Posterior cingulate gyrus (tissue), 11 donors: ENCODE measurements at regions of chr16 and their contacts with region 1.

Region 1: GRCh38 chr16:1772736-1773584 is at the starts of genes EME2 and MRPS34:
- DNase-seq: peak; percentile 76 to 97 (median 83)

Region 2: GRCh38 chr16:1705688-1706385 is 67.1 kb before region 1 on chr16 and contains the start of gene MAPK8IP3:
- intact Hi-C with region 1: loop called (anchors 5 kb)
- DNase-seq: peak; percentile 86 to 99 (median 90)

Region 3: DNA sequence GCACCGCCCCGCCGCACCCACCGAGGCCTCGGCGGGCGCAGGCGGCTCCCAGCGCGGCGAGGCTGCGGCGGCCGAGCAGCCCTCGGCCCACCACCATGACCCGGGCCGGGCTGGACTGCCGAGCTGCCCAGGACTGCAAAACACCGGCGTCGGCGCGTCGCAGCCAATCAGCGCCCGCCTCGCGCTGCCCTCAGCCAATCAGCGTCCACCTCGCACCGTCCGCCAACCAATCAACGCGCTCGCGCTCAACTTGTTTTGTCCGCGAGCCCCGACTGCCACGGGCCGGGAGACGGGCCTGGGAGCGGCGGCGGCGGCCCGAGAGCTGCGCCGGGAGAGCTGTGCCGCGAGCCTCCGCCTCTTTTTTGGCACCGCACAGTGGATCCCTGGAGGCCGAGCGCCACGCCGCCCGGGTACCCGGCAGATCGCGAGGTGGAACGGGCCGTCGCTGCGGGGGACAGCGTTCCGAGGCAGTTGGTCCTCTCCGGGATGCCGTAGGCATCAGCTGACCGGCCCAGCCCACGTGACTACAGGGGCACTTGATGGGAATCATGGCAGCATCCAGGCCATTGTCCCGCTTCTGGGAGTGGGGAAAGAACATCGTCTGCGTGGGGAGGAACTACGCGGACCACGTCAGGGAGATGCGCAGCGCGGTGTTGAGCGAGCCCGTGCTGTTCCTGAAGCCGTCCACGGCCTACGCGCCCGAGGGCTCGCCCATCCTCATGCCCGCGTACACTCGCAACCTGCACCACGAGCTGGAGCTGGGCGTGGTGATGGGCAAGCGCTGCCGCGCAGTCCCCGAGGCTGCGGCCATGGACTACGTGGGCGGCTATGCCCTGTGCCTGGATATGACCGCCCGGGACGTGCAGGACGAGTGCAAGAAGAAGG is 54.0 kb after region 1 on chr16 and contains the starts of genes FAHD1 and HAGH:
- intact Hi-C with region 1: loop called (anchors 5 kb)
- DNase-seq: peak; percentile 91 to 99 (median 95)

Region 4: GRCh38 chr16:1959269-1960049 is 186.5 kb after region 1 on chr16 and contains the start of gene NDUFB10:
- intact Hi-C with region 1: loop called (anchors 5 kb)
- DNase-seq: peak; percentile 88 to 99 (median 92)